Left ventricle myocardium inferior (tissue), 1 donor: ENCODE measurements at regions of chr12 and their contacts with region 1.

Region 1: GRCh38 chr12:117025481-117026151 is 73.6 kb downstream of the TESC start:
- DNase-seq: peak; percentile 65
- H3K4me3 ChIP-seq: no peak overlapping the region
- H3K27ac ChIP-seq: peak overlapping the region; percentile 54
- H3K4me1 ChIP-seq: peaks cover 50% of the 10 kb centered on the region
- H3K27me3 ChIP-seq: no peaks in the 10 kb centered on the region
- CTCF ChIP-seq: peak; percentile 96

Region 2: DNA sequence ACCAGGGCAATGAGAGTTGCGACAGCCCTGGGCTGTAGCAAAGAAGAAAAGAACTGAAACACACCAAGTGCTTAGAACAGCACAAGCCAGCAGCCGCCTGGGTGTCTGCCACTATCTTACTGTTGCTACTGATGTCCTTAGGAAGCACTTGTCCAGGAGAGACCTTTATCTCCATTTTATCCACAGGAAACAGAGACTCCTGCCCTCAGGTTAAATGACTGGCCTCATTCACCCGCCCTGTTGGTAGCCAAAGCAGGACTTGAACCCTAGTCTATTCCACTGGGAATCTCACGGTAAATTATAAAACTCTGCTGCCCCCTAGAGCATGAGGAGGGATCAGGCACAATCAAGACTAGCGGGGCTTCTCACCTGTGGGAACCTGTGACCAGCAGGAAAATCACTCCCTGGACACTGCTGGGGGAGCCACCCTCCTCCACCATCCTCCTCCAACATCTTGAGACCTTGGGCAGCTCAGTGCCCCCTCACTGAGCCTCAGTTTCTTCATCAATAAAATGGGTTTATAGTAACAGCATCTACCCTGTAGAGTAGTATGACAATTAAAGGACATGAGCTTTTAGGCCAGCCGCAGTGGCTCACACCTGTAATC is 94.1 kb after region 1 on chr12:
- intact Hi-C with region 1: loop called (anchors 10 kb)
- DNase-seq: peak; percentile 31
- H3K4me3 ChIP-seq: no peak overlapping the region
- H3K27ac ChIP-seq: peak overlapping the region; percentile 62
- H3K4me1 ChIP-seq: peaks cover 36% of the 10 kb centered on the region
- H3K27me3 ChIP-seq: no peaks in the 10 kb centered on the region
- CTCF ChIP-seq: peak; percentile 74

Region 3: DNA sequence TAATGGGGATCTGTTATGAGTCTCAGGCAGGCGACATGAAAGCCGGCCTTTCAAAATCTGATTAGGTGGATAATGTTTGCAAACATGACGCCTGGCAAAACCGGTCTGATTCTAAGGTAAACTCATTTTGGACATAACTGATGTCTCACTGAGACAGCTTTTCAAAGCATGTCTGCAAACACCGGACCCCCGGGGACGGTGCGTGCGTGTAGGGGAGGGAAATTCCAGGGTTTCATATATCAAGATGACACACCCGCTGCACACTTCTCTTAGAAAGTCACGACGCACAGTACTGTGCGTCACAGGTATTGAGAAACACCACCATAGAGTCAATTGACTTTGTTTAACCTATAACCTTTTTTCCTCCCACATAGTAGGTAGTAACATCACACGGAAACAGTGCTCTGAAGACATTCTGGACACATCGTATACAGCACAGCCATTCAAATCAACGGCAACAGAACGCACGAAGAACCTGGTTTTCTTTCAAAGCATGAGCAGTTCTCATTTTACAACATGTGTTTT is 117.5 kb after region 1 on chr12:
- intact Hi-C with region 1: loop called (anchors 10 kb)
- DNase-seq: no peak
- H3K4me3 ChIP-seq: no peak overlapping the region
- H3K27ac ChIP-seq: no peak overlapping the region
- H3K4me1 ChIP-seq: peaks cover 22% of the 10 kb centered on the region
- H3K27me3 ChIP-seq: no peaks in the 10 kb centered on the region
- CTCF ChIP-seq: no peak